ENCODE measurements at regions of chr2 and their contacts with region 1.

Region 1: DNA sequence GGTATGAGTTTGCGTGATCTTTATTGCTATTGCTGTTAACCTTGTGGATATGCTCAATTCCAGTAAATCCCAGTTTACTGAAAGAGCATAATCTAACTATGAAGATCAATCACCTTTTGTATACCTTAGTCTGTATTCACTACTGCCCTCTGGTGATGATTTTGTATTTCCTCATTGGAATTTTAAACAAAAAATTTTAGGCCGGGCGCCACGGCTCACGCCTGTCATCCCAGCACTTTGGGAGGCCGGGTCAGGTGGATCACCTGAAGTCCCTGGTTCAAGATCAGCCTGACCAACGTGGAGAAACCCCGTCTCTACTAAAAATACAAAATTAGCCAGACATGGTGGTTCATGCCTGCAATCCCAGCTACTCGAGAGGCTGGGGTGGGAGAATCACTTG is 5.1 kb downstream of the COMMD1 start:
- DNase-seq: no peak
- H3K4me3 ChIP-seq: no peak overlapping the region
- H3K27ac ChIP-seq: no peak overlapping the region
- H3K4me1 ChIP-seq: no peaks in the 10 kb centered on the region
- H3K27me3 ChIP-seq: no peaks in the 10 kb centered on the region
- CTCF ChIP-seq: no peak
- EP300 ChIP-seq: no peak
- POLR2A ChIP-seq: no peak

Region 2: DNA sequence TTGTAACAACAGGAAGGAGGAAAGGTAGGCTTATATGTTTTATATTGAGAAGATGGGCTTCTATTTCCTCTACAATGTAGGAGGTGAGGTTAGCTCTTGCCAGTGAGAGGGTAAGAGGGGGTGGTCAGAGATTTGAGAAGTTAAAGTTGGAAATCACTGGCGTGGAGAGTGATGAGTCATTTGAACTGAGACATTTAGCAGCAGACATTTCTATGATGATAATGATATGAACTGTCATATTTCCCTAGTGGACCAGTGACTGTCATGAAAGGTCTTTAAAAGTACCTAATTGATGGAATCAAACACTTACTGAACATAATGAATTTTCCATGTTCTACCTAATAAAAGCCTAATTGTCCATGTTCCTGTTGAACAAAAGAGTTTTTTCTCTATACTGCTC is 182.9 kb before region 1 on chr2:
- intact Hi-C with region 1: no loop called
- DNase-seq: no peak
- H3K4me3 ChIP-seq: no peak overlapping the region
- H3K27ac ChIP-seq: no peak overlapping the region
- H3K4me1 ChIP-seq: no peaks in the 10 kb centered on the region
- H3K27me3 ChIP-seq: no peaks in the 10 kb centered on the region
- CTCF ChIP-seq: no peak
- EP300 ChIP-seq: no peak
- POLR2A ChIP-seq: no peak

Region 3: GRCh38 chr2:62195421-62196277 is 285.0 kb after region 1 on chr2 and contains the start of gene B3GNT2:
- intact Hi-C with region 1: loop called in 1 of 4 experiments (anchors 10 kb)
- DNase-seq: peak; percentile 81 to 89 (median 87)
- H3K4me3 ChIP-seq: peak within 1 kb of the TSS; percentile 56
- H3K27ac ChIP-seq: peak within 1 kb of the TSS; percentile 74 to 76
- H3K4me1 ChIP-seq: peaks cover 5% of the 10 kb centered on the region
- H3K27me3 ChIP-seq: no peaks in the 10 kb centered on the region
- CTCF ChIP-seq: no peak
- EP300 ChIP-seq: no peak
- POLR2A ChIP-seq: peak; percentile 76
- total RNA-seq, gene B3GNT2: 6.7 to 20.6 (median 11.2) TPM

Region 4: GRCh38 chr2:62406573-62407043 is 496.0 kb after region 1 on chr2:
- intact Hi-C with region 1: loop called (anchors 5 to 10 kb)
- DNase-seq: no peak
- H3K4me3 ChIP-seq: no peak overlapping the region
- H3K27ac ChIP-seq: no peak overlapping the region
- H3K4me1 ChIP-seq: peaks cover 11% of the 10 kb centered on the region
- H3K27me3 ChIP-seq: no peaks in the 10 kb centered on the region
- CTCF ChIP-seq: no peak
- EP300 ChIP-seq: no peak
- POLR2A ChIP-seq: no peak

Region 5: GRCh38 chr2:62415019-62415431 is 504.4 kb after region 1 on chr2:
- intact Hi-C with region 1: loop called in 3 of 4 experiments (anchors 5 to 10 kb)
- DNase-seq: no peak
- H3K4me3 ChIP-seq: no peak overlapping the region
- H3K27ac ChIP-seq: no peak overlapping the region
- H3K4me1 ChIP-seq: peaks cover 9% of the 10 kb centered on the region
- H3K27me3 ChIP-seq: no peaks in the 10 kb centered on the region
- CTCF ChIP-seq: no peak
- EP300 ChIP-seq: no peak
- POLR2A ChIP-seq: no peak

Region 6: DNA sequence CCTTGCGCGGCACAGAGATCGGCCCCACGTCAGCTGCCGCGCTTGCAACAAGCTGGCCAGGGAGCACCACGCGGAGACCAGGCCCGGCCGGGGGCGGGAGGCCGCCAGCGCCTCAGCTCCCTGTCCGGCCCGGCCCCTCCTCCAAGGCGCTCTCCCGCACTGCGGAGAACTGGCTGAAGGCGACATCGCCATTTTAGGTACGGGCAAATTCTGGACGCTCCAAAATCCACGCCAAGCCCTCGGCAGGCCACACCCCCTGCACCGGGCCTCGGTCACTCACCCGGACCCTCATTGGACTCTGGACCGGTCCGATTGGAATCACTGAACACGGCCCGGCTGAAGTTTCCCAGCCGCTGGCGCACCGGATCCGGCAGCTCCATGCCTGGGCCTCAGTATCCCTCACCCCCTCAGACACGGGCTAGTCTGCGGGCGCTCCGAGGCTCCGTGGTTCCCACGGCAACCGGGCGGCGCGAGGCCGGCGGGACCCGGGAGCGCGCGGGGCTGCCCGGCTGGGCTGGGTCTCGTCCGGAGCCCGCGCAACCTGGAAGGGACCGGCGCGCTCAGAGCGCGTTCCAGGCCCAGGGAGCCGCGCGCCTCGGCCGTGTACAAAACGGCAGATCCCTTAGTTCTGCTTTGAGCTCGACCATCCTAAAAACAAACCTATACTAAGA is 595.3 kb after region 1 on chr2 and contains the start of gene TMEM17:
- intact Hi-C with region 1: loop called in 1 of 4 experiments (anchors 5 kb)
- DNase-seq: peak; percentile 95 to 97 (median 96)
- H3K4me3 ChIP-seq: peak within 1 kb of the TSS; percentile 68
- H3K27ac ChIP-seq: peak within 1 kb of the TSS; percentile 84 to 91
- H3K4me1 ChIP-seq: peaks cover 1% of the 10 kb centered on the region
- H3K27me3 ChIP-seq: no peaks in the 10 kb centered on the region
- CTCF ChIP-seq: no peak
- EP300 ChIP-seq: no peak
- POLR2A ChIP-seq: peak; percentile 25
- total RNA-seq, gene TMEM17: 0.94 to 2.5 (median 2.1) TPM